Esophagus squamous epithelium (tissue), 5 donors: ENCODE measurements at regions of chr6 and their contacts with region 1.

Region 1: DNA sequence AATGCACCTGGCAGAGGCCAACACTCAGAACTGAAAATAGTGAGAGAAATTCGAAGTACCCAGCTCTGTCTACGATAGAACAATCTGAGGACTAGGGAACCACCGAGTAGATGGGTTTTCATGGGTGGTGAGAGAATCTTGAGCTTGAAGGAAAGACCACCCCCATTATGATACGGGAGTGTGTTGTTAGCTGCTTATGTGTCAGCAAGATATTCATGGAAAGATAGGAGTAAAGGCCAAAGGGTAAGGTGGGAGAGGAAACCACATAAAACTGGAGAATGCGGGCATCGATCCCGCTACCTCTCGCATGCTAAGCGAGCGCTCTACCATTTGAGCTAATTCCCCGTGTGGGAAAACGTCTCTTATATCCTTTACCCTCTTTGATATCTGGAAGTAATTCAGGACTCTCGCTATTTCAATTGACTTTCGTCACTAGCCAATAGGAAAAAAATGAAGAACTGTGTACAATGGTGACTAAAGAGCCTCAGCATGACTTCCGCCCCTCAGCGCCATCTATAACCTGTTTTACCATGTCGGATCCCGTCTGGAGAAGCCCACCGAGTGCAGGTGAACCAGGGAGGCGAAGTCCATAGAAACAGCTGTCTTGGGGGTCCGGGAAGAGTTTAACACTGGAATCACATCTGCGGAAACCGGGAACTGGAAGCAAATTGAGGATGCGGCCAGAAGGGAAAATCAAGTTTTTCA is 25.0 kb upstream of the ABT1 start:
- DNase-seq: no peak
- H3K4me3 ChIP-seq: peak overlapping the region; percentile 35 to 66 (median 54)
- H3K27ac ChIP-seq: peak overlapping the region; percentile 65 to 84 (median 78)
- H3K4me1 ChIP-seq: peaks cover 0 to 36% (median 6%) of the 10 kb centered on the region in 3 donors
- H3K27me3 ChIP-seq: peaks cover 0 to 18% (median 0%) of the 10 kb centered on the region in 4 donors
- CTCF ChIP-seq: no peak
- POLR2A ChIP-seq: no peak

Region 2: DNA sequence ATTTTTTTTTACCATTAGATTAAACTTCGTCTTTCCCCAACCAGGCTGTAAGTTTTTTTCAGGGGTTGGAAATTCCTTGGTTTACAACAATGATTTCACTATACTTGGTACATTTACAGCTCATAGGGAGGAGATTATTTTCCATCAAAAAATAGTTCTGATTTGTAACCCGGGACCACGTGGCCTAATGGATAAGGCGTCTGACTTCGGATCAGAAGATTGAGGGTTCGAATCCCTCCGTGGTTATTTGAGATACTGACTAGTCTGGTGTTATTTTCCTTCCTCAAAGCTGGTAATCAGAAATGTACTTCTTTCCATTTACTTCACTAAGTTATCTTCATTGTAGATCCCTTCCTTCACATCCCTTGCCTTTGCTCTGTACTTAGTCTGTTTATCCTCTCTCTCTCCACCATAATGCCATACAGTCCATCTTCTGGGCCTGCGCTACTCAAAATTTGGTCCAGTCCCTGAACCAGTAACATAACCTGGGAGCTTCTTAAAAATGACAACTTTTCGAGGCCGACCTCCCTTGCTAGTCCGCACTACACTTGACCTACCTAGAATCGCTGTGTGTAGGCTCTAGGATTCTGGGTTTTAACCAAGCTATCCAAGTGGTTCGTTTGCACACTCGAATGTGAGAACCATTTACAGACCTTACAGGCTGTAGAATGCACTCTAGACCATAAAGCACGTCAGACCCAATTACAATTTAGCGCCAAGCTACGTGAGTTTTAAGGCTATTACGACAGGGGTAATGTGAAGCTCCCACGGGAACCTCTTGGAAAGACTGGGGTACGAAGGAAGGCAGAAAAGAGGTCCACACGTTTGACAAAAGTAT is 248.9 kb before region 1 on chr6:
- intact Hi-C with region 1: loop called (anchors 10 kb)
- DNase-seq: no peak
- H3K4me3 ChIP-seq: peak overlapping the region; percentile 30 to 68 (median 54)
- H3K27ac ChIP-seq: peak overlapping the region in 3 of 4 donors; percentile 56 to 70 (median 56)
- H3K4me1 ChIP-seq: peaks cover 0 to 27% (median 7%) of the 10 kb centered on the region in 3 donors
- H3K27me3 ChIP-seq: peaks cover 0 to 64% (median 7%) of the 10 kb centered on the region in 4 donors
- CTCF ChIP-seq: no peak
- POLR2A ChIP-seq: no peak

Region 3: DNA sequence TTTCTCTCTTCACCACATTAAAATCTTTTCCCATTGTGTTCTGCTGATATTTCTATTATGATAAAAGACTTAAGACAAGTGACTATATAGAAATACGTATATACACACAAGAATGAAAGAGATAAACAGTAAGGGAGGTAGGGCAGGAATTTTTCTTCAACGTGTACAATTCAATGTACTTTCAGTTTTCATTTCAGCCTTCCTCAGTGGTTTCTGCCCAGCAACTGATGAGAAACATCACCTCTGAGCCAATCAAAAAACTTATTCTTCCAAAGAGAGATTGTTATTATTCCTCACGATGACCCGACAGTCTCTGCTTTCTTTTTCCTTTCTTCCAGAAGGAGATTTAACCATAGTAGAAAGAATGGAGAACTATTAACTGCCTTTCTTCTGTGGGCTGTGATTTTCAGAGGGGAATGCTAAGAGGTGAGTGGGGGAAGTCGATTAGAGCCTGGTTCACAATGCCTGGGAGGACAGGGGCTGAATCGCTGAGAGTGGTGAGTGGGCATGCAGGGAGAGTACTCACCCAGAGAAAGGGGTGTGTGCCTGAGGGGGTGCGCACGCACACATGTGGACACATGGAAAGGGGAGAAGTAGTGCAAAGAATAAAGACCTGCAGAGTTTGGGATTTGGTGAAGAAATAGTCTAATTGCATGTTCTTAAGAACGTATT is 169.6 kb before region 1 on chr6 and contains the start of gene BTN3A1:
- intact Hi-C with region 1: no loop called
- DNase-seq: peak; percentile 5
- H3K4me3 ChIP-seq: peak within 1 kb of the TSS; percentile 44 to 78 (median 60)
- H3K27ac ChIP-seq: peak within 1 kb of the TSS; percentile 78 to 93 (median 89)
- H3K4me1 ChIP-seq: peaks cover 5 to 30% (median 14%) of the 10 kb centered on the region in 3 donors
- H3K27me3 ChIP-seq: no peaks in the 10 kb centered on the region
- CTCF ChIP-seq: no peak
- POLR2A ChIP-seq: peak in 1 of 4 donors; percentile 41
- total RNA-seq, gene BTN3A1: 4.2 to 14.4 (median 8.0) TPM